Activated naive CD4-positive, alpha-beta T cell treated with anti-CD3 and anti-CD28 coated beads for 36 hours (primary cell): ENCODE measurements at regions of chr5 and their contacts with region 1.

Region 1: GRCh38 chr5:126499853-126500342 is 76.7 kb downstream of the GRAMD2B start:
- DNase-seq: peak; percentile 43
- H3K4me3 Mint-ChIP-seq: no peak overlapping the region
- H3K27ac Mint-ChIP-seq: no peak overlapping the region
- H3K4me1 Mint-ChIP-seq: peaks cover 18% of the 10 kb centered on the region
- H3K27me3 Mint-ChIP-seq: no peaks in the 10 kb centered on the region

Region 2: GRCh38 chr5:126339215-126339805 is 160.6 kb before region 1 on chr5:
- CTCF ChIA-PET with region 1: interaction called, 35 read pairs
- intact Hi-C with region 1: loop called (anchors 1 kb)
- DNase-seq: peak; percentile 73
- H3K4me3 Mint-ChIP-seq: no peak overlapping the region
- H3K27ac Mint-ChIP-seq: no peak overlapping the region
- H3K4me1 Mint-ChIP-seq: no peaks in the 10 kb centered on the region
- H3K27me3 Mint-ChIP-seq: peaks cover 14% of the 10 kb centered on the region

Region 3: DNA sequence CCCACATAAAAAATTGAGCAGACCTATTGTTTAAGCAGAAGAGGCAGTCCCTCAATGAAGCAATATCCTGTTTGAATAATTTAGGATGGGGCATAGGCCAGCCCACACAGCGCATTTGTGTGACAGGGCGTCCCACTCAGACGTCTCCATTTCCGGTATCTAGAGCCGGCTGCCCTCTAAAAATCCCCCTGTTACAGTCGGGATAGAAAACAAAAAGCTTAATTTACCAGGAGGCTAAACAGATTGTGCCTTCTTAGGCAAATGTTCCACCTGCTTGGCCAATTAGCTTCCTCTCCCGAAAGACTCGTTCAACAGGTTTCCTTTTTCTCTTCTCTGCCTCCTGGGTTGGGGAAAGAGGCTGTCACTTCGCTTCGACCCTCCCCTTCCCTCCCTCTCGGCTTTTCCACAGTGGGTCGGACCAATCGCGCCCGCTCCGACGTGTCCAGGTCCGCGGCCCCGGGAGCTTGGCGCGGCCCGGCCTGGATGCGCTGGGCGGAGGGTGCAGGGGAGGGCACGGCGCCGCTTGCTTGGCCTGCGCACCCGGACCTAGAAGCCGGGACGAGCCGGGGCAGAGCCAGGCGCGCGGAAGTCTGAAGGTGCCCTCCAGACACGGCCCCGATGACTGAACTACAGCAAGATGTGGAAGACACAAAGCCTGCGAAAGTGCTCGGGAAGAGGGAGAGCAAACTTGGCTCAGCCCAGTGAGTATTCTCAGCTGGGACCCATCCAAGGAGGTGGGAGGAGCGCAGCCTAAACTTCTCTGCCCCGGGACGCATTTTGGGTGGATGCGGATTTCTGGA is 76.7 kb before region 1 on chr5 and contains the start of gene GRAMD2B:
- CTCF ChIA-PET with region 1: interaction called, 14 read pairs
- intact Hi-C with region 1: loop called (anchors 1 kb)
- DNase-seq: peak; percentile 87
- H3K4me3 Mint-ChIP-seq: peak within 1 kb of the TSS; percentile 81
- H3K27ac Mint-ChIP-seq: peak within 1 kb of the TSS; percentile 88
- H3K4me1 Mint-ChIP-seq: peaks cover 29% of the 10 kb centered on the region
- H3K27me3 Mint-ChIP-seq: no peaks in the 10 kb centered on the region
- total RNA-seq, gene GRAMD2B: 8.7 to 10.8 TPM

Region 4: GRCh38 chr5:126531543-126532120 is 31.7 kb after region 1 on chr5:
- CTCF ChIA-PET with region 1: interaction called, 10 read pairs
- intact Hi-C with region 1: no loop called
- DNase-seq: no peak
- H3K4me3 Mint-ChIP-seq: no peak overlapping the region
- H3K27ac Mint-ChIP-seq: no peak overlapping the region
- H3K4me1 Mint-ChIP-seq: no peaks in the 10 kb centered on the region
- H3K27me3 Mint-ChIP-seq: no peaks in the 10 kb centered on the region

Region 5: GRCh38 chr5:126544087-126544740 is 44.3 kb after region 1 on chr5:
- CTCF ChIA-PET with region 1: interaction called, 28 read pairs
- intact Hi-C with region 1: loop called (anchors 1 kb)
- DNase-seq: peak; percentile 68
- H3K4me3 Mint-ChIP-seq: no peak overlapping the region
- H3K27ac Mint-ChIP-seq: no peak overlapping the region
- H3K4me1 Mint-ChIP-seq: no peaks in the 10 kb centered on the region
- H3K27me3 Mint-ChIP-seq: no peaks in the 10 kb centered on the region

Region 6: DNA sequence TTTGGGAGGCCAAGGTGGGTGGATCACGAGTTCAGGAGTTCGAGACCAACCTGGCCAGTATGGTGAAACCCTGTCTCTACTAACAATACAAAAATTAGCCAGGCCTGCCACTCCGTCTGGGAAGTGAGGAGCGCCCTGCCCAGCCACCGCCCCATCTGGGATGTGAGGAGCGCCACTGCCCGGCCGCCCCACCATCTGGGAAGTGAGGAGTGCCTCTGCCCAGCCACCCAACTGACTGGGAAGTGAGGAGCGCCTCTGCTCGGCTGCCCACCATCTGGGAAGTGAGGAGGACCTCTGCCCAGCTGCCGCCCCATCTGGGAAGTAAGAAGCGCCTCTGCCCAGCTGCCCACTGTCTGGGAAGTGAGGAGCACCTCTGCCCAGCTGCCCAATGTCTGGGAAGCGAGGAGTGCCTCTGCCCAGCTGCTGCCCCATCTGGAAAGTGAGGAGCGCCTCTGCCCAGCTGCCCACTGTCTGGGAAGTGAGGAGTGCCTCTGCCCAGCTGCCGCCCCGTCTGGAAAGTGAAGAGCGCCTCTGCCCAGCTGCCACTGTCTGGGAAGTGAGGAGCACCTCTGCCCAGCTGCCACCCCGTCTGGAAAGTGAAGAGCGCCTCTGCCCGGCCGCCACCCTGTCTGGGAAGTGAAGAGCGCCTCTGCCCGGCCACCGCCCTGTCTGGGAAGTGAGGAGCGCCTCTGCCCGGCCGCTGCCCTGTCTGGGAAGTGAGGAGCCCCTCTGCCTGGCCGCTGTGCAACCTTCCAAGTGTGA is 89.8 kb after region 1 on chr5:
- CTCF ChIA-PET with region 1: no interaction called
- intact Hi-C with region 1: no loop called
- DNase-seq: no peak
- H3K4me3 Mint-ChIP-seq: no peak overlapping the region
- H3K27ac Mint-ChIP-seq: no peak overlapping the region
- H3K4me1 Mint-ChIP-seq: peaks cover 5% of the 10 kb centered on the region
- H3K27me3 Mint-ChIP-seq: peaks cover 6% of the 10 kb centered on the region